ENCODE measurements at regions of chr21 and their contacts with region 1.

Region 1: GRCh38 chr21:42496122-42496900 is at the start of gene RSPH1:
- DNase-seq: peak; percentile 99
- H3K4me3 Mint-ChIP-seq: peak within 1 kb of the TSS; percentile 92
- H3K27ac Mint-ChIP-seq: peak within 1 kb of the TSS; percentile 83
- H3K4me1 Mint-ChIP-seq: peaks cover 25% of the 10 kb centered on the region
- H3K27me3 Mint-ChIP-seq: peaks cover 6% of the 10 kb centered on the region
- total RNA-seq, gene RSPH1: not detected in 2 replicates

Region 2: DNA sequence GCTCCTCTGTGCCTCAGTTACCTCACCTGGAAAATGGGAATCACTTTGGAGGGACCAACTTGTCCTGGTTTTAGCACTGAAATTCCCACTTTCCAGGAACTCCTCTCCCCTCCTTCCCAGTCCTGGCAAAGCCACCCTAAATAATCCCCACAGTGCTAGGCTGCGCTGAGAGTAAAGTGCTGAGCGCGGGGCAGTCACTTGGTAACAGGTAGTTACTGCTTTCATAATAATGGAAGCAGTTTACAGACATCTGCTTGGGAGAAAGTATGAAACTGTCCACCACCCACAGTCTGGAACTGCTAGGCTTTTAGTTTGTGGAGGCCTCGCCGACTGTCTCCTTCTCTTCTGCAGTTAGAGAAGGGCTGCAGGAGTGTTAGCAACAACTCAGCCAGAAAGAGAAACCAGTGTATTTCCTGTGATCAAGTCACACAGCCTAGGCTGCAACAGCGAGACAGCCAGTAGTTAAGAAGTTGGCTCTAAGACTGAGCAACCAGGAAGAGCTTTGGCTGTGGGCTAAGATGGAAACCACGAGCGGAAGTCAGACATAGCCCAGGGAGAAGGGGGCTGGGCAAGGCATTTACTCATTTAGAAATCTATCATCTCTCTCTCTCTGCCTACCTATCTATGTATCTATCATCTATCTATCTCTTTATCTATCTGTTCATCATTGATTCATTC is 308.2 kb before region 1 on chr21:
- intact Hi-C with region 1: loop called (anchors 1 kb)
- DNase-seq: peak; percentile 81
- H3K4me3 Mint-ChIP-seq: peak overlapping the region; percentile 68
- H3K27ac Mint-ChIP-seq: peak overlapping the region; percentile 89
- H3K4me1 Mint-ChIP-seq: peaks cover 70% of the 10 kb centered on the region
- H3K27me3 Mint-ChIP-seq: no peaks in the 10 kb centered on the region

Region 3: DNA sequence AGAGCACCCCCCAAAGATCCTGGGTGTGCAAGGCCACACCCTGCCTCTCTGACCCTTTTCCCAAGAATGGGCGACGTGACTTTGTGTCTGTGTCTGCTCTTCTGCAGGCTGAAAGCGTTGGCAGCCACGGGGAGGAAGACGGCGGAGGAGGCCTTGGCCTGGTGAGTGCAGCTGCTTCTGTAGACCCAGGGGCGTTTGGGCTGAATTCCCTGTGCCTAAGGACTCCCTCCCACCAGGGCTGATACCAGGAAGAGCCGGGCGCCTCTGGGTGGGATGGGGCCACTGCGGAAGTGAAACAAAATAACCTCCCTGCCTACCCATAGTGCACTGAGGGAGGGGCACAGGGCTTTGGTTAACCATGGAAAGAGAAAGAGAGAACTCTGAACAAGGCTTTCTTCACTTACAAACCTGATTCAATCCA is 90.1 kb before region 1 on chr21:
- intact Hi-C with region 1: loop called (anchors 2 kb)
- DNase-seq: peak; percentile 59
- H3K4me3 Mint-ChIP-seq: peak overlapping the region; percentile 92
- H3K27ac Mint-ChIP-seq: peak overlapping the region; percentile 94
- H3K4me1 Mint-ChIP-seq: peaks cover 58% of the 10 kb centered on the region
- H3K27me3 Mint-ChIP-seq: no peaks in the 10 kb centered on the region

Region 4: DNA sequence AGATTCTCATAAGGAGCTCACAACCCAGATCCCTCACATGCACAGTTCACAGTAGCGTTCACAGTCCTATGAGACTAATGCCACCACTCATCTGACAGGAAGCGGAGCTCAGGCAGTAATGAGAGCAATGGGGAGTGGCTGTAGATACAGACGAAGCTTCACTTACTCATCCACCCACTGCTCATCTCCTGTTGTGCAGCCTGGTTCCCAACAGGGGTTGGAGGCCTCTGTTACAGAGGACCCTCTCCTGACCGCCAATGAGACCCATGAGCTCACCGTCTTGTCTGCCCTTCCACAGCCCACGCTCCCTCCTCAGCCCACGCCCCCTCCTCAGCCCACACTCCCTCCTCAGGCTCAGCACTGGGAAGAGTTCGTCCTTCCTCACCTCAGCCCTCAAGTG is 39.9 kb before region 1 on chr21:
- intact Hi-C with region 1: loop called (anchors 1 kb)
- DNase-seq: peak; percentile 33
- H3K4me3 Mint-ChIP-seq: no peak overlapping the region
- H3K27ac Mint-ChIP-seq: peak overlapping the region; percentile 59
- H3K4me1 Mint-ChIP-seq: peaks cover 52% of the 10 kb centered on the region
- H3K27me3 Mint-ChIP-seq: no peaks in the 10 kb centered on the region

Region 5: DNA sequence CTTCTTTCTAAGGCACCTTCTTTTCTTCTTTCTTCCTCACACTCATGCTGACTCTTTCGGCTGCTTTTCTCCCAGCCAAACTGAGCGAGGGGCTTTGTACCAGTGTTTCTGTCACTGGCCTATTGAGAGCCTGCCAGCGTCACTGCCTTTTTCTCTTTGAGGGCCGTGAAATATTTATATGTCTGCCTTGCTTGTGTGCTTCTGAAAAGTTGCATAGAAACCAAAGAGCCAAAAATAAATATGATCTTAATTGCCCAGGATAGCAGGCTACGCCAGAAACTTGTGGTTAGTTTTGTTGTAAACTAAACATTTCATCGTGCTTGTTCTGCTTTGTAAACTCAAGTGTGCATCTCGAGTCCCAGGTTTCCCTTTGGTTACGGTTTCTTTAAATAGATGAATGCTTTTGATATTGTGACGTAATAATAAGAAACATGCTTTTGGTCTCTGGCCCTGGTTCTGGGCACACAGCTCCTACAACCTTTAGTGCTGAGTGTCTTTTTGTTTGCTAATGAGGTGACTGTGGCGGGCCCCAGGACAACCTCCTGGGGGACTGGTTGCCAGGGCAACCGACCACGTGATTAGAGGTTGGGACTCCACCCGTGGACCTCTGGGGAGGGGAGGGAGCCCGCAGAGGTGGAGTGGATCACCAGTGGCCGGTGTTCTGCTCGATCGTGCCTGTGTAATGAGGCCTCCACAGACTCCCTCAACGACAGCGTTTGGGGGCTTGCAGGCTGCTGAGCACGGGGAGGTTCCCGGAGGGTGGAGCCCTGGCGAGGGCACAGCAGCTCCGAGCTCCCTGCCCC is 28.2 kb after region 1 on chr21:
- intact Hi-C with region 1: loop called (anchors 1 kb)
- DNase-seq: no peak
- H3K4me3 Mint-ChIP-seq: no peak overlapping the region
- H3K27ac Mint-ChIP-seq: no peak overlapping the region
- H3K4me1 Mint-ChIP-seq: peaks cover 49% of the 10 kb centered on the region
- H3K27me3 Mint-ChIP-seq: peaks cover 2% of the 10 kb centered on the region